Activated CD8-positive, alpha-beta T cell treated with anti-CD3 and anti-CD28 coated beads, Interleukin-2, amount 10 ng/mL, durations not matched to agents 7 days and 5 days (primary cell): ENCODE measurements at regions of chr6 and their contacts with region 1.

Region 1: DNA sequence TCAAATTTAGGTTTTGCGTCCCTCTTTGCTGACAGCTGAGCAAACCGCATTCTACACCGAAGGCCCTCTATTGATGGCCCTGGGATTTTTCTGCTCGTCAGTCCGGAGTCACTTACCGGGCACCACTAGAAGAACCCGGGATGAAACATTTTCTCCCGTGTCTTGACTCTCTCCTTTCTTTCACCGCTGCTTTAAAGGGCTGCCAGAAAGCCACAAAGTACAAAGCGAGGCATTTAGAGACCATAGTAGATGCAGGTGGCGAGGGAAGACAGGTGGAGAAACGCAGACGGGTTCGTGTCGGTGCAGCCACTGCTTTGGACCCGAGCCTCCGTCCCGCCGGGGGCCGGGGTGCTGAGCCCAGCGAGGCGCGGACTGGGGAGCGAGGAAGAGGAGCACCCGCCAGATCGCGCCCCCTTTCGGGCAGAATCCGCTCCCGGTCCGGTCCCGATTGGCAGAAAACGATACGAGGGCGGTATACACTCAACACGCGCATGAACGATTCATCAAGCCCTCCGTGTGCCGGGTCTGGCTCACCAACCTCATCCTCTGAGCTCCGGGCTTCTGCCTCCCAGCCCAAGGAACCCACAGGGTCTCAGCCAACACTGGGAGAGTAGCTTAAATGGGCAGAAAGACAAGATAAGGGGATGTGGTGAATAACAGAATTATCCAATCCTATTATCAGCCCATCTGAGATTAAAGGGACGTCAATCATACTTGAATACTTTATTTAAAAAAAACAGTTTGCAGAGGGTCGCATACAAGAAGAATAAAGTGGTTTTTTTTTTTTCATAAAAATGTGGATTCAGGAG is 84.9 kb downstream of the TRIM27 start:
- DNase-seq: peak; percentile 88
- ATAC-seq: peak; percentile 88
- H3K4me3 Mint-ChIP-seq: peak overlapping the region; percentile 90
- H3K27ac Mint-ChIP-seq: peak overlapping the region; percentile 82
- H3K4me1 Mint-ChIP-seq: peaks cover 24% of the 10 kb centered on the region
- H3K27me3 Mint-ChIP-seq: peaks cover 24% of the 10 kb centered on the region

Region 2: DNA sequence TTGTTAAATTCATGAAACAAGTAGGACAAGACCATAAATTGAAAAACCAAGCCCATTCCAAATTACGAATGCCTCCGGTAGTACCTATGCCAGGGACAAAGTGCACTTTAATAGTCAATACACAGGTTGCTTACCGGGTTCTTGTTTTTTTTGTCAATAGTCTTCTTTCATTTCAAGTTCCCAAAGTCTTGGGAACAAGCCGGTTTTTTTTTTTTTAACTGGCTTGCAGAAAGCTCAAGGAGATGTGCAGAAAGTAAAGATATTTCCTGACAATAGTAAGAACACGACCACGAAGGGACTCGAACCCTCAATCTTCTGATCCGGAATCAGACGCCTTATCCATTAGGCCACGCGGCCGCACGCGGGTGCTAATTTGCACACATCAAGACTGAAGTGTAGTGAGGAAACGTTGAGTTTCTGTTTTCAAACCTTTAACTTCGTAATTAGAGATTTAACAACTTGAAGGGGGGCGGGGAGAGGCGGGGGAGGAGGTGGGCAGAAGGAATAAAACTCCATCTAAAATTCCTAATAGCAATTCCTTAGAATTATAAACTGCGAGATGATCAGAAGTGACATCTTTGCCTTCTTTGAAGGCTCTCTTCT is 96.1 kb before region 1 on chr6:
- CTCF ChIA-PET with region 1: no interaction called
- POLR2A ChIA-PET with region 1: no interaction called
- DNase-seq: no peak
- ATAC-seq: no peak
- H3K4me3 Mint-ChIP-seq: no peak overlapping the region
- H3K27ac Mint-ChIP-seq: no peak overlapping the region
- H3K4me1 Mint-ChIP-seq: peaks cover 11% of the 10 kb centered on the region
- H3K27me3 Mint-ChIP-seq: peaks cover 48% of the 10 kb centered on the region

Region 3: GRCh38 chr6:28863604-28864320 is 24.9 kb after region 1 on chr6:
- CTCF ChIA-PET with region 1: interaction called, 51 read pairs
- POLR2A ChIA-PET with region 1: interaction called, 8 read pairs
- DNase-seq: peak; percentile 90
- ATAC-seq: peak; percentile 47
- H3K4me3 Mint-ChIP-seq: peak overlapping the region; percentile 89
- H3K27ac Mint-ChIP-seq: peak overlapping the region; percentile 81
- H3K4me1 Mint-ChIP-seq: peaks cover 53% of the 10 kb centered on the region
- H3K27me3 Mint-ChIP-seq: peaks cover 7% of the 10 kb centered on the region

Region 4: DNA sequence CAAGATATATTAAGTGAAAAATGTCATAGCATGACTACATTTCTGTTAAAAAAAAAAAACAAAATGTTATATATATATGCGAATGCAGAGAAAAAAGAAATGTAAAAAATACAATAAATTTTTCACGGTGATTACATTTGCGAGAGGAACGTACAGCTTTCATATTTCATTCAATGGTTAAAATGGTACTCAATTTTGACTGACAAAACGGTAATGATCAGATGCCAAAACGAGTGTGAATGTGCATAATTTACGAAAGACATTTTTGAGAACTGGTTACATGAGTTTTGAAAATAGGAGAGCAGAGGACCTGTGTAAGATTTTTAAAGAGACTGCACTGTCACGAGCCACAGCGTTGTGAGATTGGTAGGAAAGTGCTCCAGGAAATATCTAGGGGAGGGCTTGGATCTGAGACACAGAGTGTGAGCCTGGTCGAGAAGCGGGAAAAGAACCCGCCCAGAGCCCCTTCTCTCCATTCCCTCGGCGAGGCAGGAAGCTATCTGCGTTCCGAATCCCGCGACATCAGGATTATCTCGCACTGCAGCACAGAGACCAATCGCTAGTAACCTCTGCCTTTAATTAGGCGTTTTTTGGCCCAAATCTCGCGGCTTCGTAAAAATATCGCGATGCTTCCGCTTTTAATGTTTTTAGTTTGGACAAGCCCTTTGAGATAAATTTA is 56.4 kb after region 1 on chr6:
- CTCF ChIA-PET with region 1: interaction called, 15 read pairs
- POLR2A ChIA-PET with region 1: interaction called, 10 read pairs
- DNase-seq: peak; percentile 97
- ATAC-seq: peak; percentile 84
- H3K4me3 Mint-ChIP-seq: peak overlapping the region; percentile 92
- H3K27ac Mint-ChIP-seq: peak overlapping the region; percentile 98
- H3K4me1 Mint-ChIP-seq: peaks cover 12% of the 10 kb centered on the region
- H3K27me3 Mint-ChIP-seq: peaks cover 6% of the 10 kb centered on the region

Region 5: DNA sequence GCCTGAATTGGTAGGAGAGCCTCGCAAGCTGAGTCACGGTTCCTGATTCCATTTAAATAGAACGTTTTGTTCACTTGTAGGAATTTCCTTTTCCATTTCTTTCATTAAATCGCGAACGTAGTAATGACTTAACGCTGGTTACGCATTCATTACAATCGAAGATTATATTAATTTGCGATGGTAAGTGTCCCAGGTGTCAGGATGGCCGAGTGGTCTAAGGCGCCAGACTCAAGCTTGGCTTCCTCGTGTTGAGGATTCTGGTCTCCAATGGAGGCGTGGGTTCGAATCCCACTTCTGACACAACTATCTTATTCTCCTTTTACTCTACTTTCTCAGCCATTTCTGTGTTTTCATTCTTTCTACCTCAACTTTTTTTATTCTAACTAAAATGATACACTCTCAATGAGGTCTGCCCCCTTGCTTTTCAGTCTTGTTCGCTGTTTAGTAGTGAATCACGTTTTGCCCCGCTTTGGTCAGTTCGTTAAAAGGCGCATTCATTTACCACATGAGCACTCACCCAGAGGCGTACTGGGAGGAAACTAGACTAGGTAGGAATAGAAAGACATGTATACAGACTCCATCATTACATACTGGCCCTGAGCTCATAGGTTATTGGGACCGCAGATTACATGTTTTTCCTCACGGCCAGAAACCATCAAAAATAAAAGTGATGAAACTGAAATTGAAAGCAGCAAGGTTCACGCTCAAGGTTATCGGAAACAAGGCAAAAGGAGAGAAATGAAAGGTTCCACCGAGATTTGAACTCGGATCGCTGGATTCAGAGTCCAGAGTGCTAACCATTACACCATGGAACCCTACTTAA is 102.2 kb after region 1 on chr6:
- CTCF ChIA-PET with region 1: interaction called, 21 read pairs
- POLR2A ChIA-PET with region 1: interaction called, 5 read pairs
- DNase-seq: peak; percentile 89
- ATAC-seq: peak; percentile 81
- H3K4me3 Mint-ChIP-seq: peak overlapping the region; percentile 80
- H3K27ac Mint-ChIP-seq: peak overlapping the region; percentile 94
- H3K4me1 Mint-ChIP-seq: peaks cover 47% of the 10 kb centered on the region
- H3K27me3 Mint-ChIP-seq: no peaks in the 10 kb centered on the region

Region 6: GRCh38 chr6:29016559-29017427 is 178.0 kb after region 1 on chr6:
- CTCF ChIA-PET with region 1: interaction called, 165 read pairs
- POLR2A ChIA-PET with region 1: no interaction called
- DNase-seq: peak; percentile 90
- ATAC-seq: peak; percentile 90
- H3K4me3 Mint-ChIP-seq: peak overlapping the region; percentile 83
- H3K27ac Mint-ChIP-seq: peak overlapping the region; percentile 83
- H3K4me1 Mint-ChIP-seq: peaks cover 15% of the 10 kb centered on the region
- H3K27me3 Mint-ChIP-seq: peaks cover 32% of the 10 kb centered on the region